Activated CD4-positive, alpha-beta memory T cell treated with anti-CD3 and anti-CD28 coated beads, Interleukin-2, amount 10 ng/mL, durations not matched to agents 7 days and 5 days (primary cell): ENCODE measurements at regions of chr2 and their contacts with region 1.

Region 1: DNA sequence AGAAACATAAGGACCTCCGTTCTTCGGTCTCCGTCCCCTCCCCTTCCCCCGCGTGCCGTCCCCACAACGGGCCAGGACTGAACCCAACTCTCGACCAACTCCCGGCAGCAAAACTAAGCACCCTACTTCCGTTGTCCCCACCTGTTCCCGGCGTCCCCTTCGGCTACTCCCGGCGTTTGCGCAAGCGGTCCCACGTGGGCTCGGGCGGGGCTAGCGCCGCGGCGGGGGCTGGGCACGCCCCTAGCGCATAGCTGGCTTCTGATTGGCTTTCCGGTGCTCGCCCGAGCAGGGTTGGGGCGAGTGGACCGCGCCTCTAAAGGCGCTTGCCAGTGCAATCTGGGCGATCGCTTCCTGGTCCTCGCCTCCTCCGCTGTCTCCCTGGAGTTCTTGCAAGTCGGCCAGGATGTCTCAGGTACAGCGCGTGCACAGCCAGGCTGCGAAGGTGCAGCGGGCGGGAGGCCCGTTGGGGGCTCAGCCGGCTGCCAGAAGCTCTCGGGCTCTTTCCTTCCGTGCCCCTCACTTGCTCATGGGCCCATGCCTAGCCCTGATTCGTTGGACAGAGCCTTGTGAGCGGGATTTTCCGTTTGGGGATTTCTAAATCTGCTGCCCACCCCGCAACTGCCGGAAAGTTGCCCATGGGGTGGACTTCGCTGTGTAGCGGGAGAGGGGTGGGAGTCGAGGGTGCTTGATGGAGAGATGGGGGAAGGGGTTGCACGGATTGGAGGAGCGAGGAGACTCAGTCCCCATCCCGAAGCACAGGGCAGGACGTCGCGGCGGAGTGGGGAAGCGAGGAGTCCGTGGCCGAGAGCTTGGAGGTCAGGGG is at the starts of genes C2orf76 and DBI:
- DNase-seq: peak; percentile 95
- H3K4me3 Mint-ChIP-seq: peak within 1 kb of the TSS; percentile 99
- H3K27ac Mint-ChIP-seq: peak within 1 kb of the TSS; percentile 88
- H3K4me1 Mint-ChIP-seq: peaks cover 46% of the 10 kb centered on the region
- H3K27me3 Mint-ChIP-seq: no peaks in the 10 kb centered on the region
- total RNA-seq, gene C2orf76: 6.9 to 7.1 TPM
- total RNA-seq, gene DBI: 142 to 150 TPM

Region 2: GRCh38 chr2:119338826-119339561 is 27.9 kb before region 1 on chr2:
- CTCF ChIA-PET with region 1: interaction called, 3 read pairs
- POLR2A ChIA-PET with region 1: interaction called, 21 read pairs
- DNase-seq: peak; percentile 63
- H3K4me3 Mint-ChIP-seq: no peak overlapping the region
- H3K27ac Mint-ChIP-seq: no peak overlapping the region
- H3K4me1 Mint-ChIP-seq: peaks cover 13% of the 10 kb centered on the region
- H3K27me3 Mint-ChIP-seq: no peaks in the 10 kb centered on the region

Region 3: GRCh38 chr2:119352357-119352756 is 14.5 kb before region 1 on chr2:
- CTCF ChIA-PET with region 1: no interaction called
- POLR2A ChIA-PET with region 1: interaction called, 14 read pairs
- DNase-seq: no peak
- H3K4me3 Mint-ChIP-seq: no peak overlapping the region
- H3K27ac Mint-ChIP-seq: no peak overlapping the region
- H3K4me1 Mint-ChIP-seq: peaks cover 7% of the 10 kb centered on the region
- H3K27me3 Mint-ChIP-seq: no peaks in the 10 kb centered on the region